ENCODE measurements at regions of chr19 and their contacts with region 1.

Region 1: DNA sequence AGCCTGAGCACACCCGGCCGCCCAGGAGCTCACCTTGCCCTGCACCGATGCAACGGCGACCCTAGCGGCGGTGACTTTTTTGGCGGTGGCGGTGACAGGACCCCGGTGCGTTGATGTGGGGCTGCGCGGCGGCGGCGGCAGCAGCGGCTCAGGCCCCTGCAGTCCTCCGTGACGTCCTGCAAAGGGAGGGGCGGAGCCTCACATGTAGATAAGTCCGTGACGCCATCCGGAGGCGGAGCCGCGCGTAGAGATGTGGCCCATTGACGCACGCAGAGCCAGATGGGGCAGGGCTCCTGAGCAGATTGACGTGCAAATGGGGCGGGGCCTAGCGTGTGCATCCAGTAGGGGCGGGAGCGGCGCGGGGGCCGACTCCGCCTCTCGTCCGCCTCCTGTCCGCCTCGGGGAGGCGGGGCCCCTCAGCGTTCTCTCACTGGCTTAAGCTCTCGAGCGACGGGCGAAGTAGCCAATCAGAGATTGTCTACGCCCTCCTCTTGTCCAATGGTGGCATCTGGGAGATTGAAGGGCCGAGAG is at the start of gene RAB3A:
- DNase-seq: peak; percentile 100
- H3K4me3 Mint-ChIP-seq: peak within 1 kb of the TSS; percentile 97
- H3K27ac Mint-ChIP-seq: peak within 1 kb of the TSS; percentile 95
- H3K4me1 Mint-ChIP-seq: peaks cover 21% of the 10 kb centered on the region
- H3K27me3 Mint-ChIP-seq: peaks cover 3% of the 10 kb centered on the region
- total RNA-seq, gene RAB3A: 9.6 and 10.3 TPM in 2 replicates

Region 2: GRCh38 chr19:18192673-18193387 is 11.1 kb before region 1 on chr19 and contains the start of gene MPV17L2:
- intact Hi-C with region 1: loop called (anchors 1 kb)
- DNase-seq: peak; percentile 99
- H3K4me3 Mint-ChIP-seq: peak within 1 kb of the TSS; percentile 81
- H3K27ac Mint-ChIP-seq: peak within 1 kb of the TSS; percentile 86
- H3K4me1 Mint-ChIP-seq: peaks cover 21% of the 10 kb centered on the region
- H3K27me3 Mint-ChIP-seq: no peaks in the 10 kb centered on the region
- total RNA-seq, gene MPV17L2: 18.4 and 20.9 TPM in 2 replicates

Region 3: DNA sequence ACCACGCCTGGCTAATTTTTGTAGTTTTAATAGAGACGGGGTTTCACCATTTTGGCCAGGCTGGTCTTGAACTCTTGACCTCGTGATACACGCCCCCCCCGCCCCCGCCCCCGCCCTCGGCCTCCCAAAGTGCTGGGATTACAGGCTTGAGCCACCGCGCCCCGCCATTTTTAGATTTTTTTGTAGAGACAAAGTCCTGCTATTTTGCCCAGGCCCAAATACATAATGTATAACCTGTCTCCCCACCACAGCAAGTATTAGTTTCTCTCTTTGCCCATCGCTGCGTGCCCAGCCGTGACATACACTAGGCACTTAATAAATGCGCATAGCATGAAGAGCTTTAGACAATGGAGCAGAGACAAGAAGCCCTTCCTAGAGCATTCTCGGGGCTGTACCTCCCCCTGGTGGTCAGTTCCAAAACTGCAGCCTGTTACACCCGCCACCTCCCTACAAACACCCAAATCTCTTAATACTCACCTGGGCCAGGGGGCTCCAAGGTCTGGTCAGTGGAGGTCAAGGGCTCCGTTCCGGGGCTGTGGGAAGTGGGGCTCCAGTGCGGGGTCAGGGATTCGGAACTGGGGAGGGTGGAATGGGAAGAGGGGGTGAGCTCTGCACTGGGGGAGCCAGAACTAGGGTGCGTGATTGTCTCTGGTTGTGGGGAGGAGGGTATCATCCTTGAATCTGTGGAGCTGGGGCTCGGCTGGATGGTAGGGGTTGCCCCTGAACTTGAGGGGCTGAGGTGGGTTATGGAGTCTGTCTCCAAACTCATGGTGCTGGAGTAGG is 47.9 kb after region 1 on chr19:
- intact Hi-C with region 1: loop called (anchors 1 kb)
- DNase-seq: peak; percentile 94
- H3K4me3 Mint-ChIP-seq: no peak overlapping the region
- H3K27ac Mint-ChIP-seq: no peak overlapping the region
- H3K4me1 Mint-ChIP-seq: peaks cover 7% of the 10 kb centered on the region
- H3K27me3 Mint-ChIP-seq: peaks cover 22% of the 10 kb centered on the region

Region 4: GRCh38 chr19:18322759-18323460 is 119.0 kb after region 1 on chr19 and contains the start of gene LSM4:
- intact Hi-C with region 1: loop called (anchors 1 kb)
- DNase-seq: peak; percentile 100
- H3K4me3 Mint-ChIP-seq: peak within 1 kb of the TSS; percentile 96
- H3K27ac Mint-ChIP-seq: peak within 1 kb of the TSS; percentile 95
- H3K4me1 Mint-ChIP-seq: peaks cover 48% of the 10 kb centered on the region
- H3K27me3 Mint-ChIP-seq: no peaks in the 10 kb centered on the region
- total RNA-seq, gene LSM4: 217 and 225 TPM in 2 replicates

Region 5: DNA sequence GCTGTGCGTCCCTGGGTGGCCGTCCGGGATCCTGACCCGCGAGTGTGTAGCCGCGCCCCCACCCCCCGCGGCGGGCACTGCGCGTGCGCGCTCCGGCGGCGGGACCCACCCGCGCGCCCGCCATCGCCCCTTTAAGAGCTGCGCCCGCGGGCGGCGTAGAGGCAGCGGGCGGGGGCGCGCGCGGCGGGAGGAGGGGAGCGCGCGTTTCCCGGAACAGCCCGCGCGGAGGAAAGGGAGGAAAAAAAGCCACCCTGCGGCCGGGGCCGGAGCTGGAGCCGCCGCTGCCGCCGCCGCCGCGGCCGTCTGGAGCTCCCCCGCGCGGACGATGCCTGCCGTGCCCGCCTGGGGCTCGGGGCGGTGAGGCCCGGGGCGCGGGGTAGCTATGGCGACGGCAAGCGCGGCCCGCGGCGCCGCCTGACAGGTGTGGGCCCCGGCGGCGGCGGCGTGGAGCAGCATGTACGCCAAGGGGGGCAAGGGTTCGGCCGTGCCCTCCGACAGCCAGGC is 215.3 kb after region 1 on chr19 and contains the start of gene SSBP4:
- intact Hi-C with region 1: loop called (anchors 5 kb)
- DNase-seq: peak; percentile 94
- H3K4me3 Mint-ChIP-seq: peak within 1 kb of the TSS; percentile 99
- H3K27ac Mint-ChIP-seq: peak within 1 kb of the TSS; percentile 89
- H3K4me1 Mint-ChIP-seq: peaks cover 72% of the 10 kb centered on the region
- H3K27me3 Mint-ChIP-seq: no peaks in the 10 kb centered on the region
- total RNA-seq, gene SSBP4: 154 TPM in 2 replicates

Measured in activated CD4-positive, alpha-beta T cell treated with anti-CD3 and anti-CD28 coated beads, Interleukin-2, amount 10 ng/mL, durations not matched to agents 24 days and 14 days (primary cell).